GM18951 (cell line): ENCODE measurements at regions of chr15 and their contacts with region 1.

Region 1: DNA sequence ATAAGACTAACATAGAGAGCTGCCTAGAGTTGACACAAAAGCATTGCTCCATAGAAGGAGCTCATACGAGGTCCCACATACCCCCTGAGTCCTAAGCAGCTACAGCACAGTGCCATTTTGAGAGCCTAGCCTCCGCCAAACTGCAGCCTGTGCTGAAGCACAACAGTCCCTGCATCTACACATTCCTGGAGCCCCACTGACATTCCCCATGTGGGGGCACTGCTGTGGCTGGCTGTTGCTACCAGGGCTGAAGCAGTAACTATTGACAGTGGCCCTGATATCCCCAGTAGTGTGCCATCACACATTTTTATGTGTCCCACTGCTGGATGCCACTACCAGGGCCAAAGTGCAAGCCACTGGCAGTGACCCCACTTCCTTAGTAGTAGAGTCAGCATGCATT is 80.3 kb downstream of the CERS3 start:
- POLR2A ChIP-seq: no peak

Region 2: DNA sequence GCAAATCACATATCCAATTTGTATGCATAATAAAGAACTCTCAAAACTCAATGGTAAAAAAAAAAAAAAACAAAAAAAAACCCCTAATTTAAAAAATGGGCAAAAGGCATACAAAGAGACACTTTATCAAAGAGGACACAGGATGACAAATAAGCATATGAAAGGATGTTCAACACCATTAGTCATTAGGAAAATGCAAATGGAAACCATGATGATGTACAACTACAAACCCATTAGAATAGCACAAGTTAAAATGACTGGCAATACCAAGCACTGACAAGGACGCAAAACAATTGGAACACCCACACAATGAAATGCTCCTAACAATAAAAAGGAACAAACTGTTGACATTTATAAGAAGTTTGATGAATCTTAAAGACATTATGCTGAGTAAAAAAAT is 43.3 kb before region 1 on chr15:
- in situ Hi-C with region 1: no loop called
- POLR2A ChIP-seq: no peak

Region 3: DNA sequence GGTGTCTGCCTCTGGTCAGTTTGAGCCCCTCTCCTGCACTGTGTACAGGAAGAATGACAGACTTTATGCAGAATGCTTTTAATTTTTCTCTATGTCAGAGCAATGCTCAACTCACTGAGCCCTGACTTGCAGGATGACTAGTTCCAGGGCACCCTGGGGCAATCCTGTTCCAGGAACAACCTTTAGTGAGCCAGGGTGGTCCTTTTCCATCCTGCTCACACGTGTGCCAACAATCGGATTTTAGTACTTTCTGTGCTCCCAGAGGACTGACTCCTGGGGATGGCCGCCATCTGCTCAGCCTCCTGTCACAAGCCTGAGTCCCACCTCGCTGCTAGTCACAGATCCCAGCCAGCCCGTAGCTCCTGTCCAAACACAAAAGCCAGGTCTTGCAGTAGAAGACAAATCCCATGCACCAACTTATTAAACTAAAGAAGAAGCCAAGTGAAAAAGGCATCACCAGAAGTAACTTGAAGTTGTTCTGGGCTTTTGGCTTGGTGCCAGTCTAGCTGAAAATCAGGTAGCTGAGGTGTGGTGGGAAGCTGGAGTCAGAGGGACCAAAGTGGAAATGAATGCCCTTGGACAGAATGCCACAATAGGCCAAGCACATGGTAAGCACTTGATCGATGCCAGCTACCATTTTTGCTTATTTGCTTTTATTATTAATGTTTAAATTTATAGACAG is 383.1 kb after region 1 on chr15:
- in situ Hi-C with region 1: no loop called
- POLR2A ChIP-seq: no peak

Region 4: GRCh38 chr15:101070502-101071273 is 622.2 kb after region 1 on chr15:
- in situ Hi-C with region 1: loop called (anchors 10 kb)
- POLR2A ChIP-seq: no peak